K562 (cell line): ENCODE measurements at regions of chr11 and their contacts with region 1.

Region 1: GRCh38 chr11:34997952-34998528 is 81.6 kb downstream of the PDHX start:
- DNase-seq: no peak
- ATAC-seq: no peak; the same call in 2 of the 3 replicates
- H3K4me3 ChIP-seq: no peak overlapping the region
- H3K27ac ChIP-seq: no peak overlapping the region
- H3K4me1 ChIP-seq: no peaks in the 10 kb centered on the region
- H3K27me3 ChIP-seq: no peaks in the 10 kb centered on the region
- CTCF ChIP-seq: peak in 2 of 3 experiments; percentile 39 to 60; a peak in 2 of 6 replicates
- EP300 ChIP-seq: no peak
- POLR2A ChIP-seq: no peak
- RAD21 ChIP-seq: peak; percentile 87 to 92

Region 2: GRCh38 chr11:35126000-35126878 is 128.2 kb after region 1 on chr11:
- CTCF ChIA-PET with region 1: no interaction called
- POLR2A ChIA-PET with region 1: no interaction called
- in situ Hi-C with region 1: no loop called
- intact Hi-C with region 1: loop called (anchors 5 kb)
- DNase-seq: no peak
- ATAC-seq: no peak
- H3K4me3 ChIP-seq: no peak overlapping the region
- H3K27ac ChIP-seq: no peak overlapping the region
- H3K4me1 ChIP-seq: no peaks in the 10 kb centered on the region
- H3K27me3 ChIP-seq: peaks cover 11 to 15% of the 10 kb centered on the region in 2 experiments; a peak in 4 of 5 replicates
- CTCF ChIP-seq: no peak
- EP300 ChIP-seq: no peak
- POLR2A ChIP-seq: no peak
- RAD21 ChIP-seq: no peak

Region 3: GRCh38 chr11:35144136-35144741 is 146.2 kb after region 1 on chr11:
- CTCF ChIA-PET with region 1: interaction called, 6 read pairs
- POLR2A ChIA-PET with region 1: no interaction called
- in situ Hi-C with region 1: no loop called
- intact Hi-C with region 1: loop called (anchors 5 kb)
- DNase-seq: no peak
- ATAC-seq: no peak
- H3K4me3 ChIP-seq: no peak overlapping the region
- H3K27ac ChIP-seq: no peak overlapping the region
- H3K4me1 ChIP-seq: peaks cover 0 to 6% of the 10 kb centered on the region in 2 experiments; a peak in 2 of 5 replicates
- H3K27me3 ChIP-seq: peaks cover 12 to 28% of the 10 kb centered on the region in 2 experiments
- CTCF ChIP-seq: no peak
- EP300 ChIP-seq: no peak
- POLR2A ChIP-seq: no peak
- RAD21 ChIP-seq: no peak

Region 4: DNA sequence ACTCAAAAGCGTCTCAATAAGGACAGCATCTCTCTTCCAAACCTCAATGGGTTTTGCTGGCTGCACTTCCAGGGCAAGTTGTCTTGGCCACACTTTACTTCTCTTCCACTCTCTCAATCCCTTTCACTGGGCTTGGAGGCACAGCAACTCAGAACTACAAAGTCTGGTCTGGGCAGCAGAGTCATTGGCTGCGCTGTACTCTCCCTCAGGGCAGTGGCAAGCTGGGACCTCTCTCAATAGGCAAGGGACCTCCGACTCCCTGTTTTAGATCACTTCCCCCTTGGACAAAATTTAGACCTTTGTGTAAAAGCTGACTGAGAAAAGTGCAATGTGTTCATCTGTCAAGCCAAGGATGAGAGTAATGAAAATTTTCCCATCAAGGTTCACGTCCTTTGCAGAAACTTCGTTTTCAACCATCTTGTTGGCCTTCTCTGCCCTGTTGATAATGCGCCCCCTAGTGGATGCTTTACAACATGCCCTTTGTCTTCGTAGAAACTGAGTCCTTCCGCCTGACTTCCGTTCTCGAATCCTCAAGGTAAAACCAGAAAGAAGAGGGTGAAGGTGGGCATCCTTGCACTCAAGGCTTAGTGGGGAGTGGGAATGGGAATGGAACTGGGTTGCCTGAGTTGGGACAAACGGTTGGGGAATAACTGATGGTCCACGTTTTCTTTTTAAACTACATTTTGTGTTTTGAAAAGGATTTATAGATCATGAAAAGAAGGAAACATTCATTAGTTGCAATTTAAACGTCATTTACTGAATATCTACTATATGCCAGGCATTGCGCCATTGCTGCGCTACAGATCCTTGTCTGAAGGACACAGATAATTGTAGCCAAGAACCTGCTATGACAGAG is 240.0 kb after region 1 on chr11:
- CTCF ChIA-PET with region 1: interaction called, 5 read pairs
- POLR2A ChIA-PET with region 1: interaction called, 3 read pairs
- in situ Hi-C with region 1: loop called (anchors 5 kb)
- intact Hi-C with region 1: loop called (anchors 1 kb)
- DNase-seq: peak; percentile 49 to 78 (median 58)
- ATAC-seq: peak; percentile 75
- H3K4me3 ChIP-seq: no peak overlapping the region
- H3K27ac ChIP-seq: no peak overlapping the region
- H3K4me1 ChIP-seq: no peaks in the 10 kb centered on the region; a peak in 1 of 5 replicates
- H3K27me3 ChIP-seq: peaks cover 0 to 3% of the 10 kb centered on the region in 2 experiments; a peak in 3 of 5 replicates
- CTCF ChIP-seq: peak; percentile 72 to 80 (median 79)
- EP300 ChIP-seq: no peak
- POLR2A ChIP-seq: no peak
- RAD21 ChIP-seq: peak; percentile 73 to 87